Breast epithelium (tissue), 4 donors: ENCODE measurements at regions of chr3 and their contacts with region 1.

Region 1: DNA sequence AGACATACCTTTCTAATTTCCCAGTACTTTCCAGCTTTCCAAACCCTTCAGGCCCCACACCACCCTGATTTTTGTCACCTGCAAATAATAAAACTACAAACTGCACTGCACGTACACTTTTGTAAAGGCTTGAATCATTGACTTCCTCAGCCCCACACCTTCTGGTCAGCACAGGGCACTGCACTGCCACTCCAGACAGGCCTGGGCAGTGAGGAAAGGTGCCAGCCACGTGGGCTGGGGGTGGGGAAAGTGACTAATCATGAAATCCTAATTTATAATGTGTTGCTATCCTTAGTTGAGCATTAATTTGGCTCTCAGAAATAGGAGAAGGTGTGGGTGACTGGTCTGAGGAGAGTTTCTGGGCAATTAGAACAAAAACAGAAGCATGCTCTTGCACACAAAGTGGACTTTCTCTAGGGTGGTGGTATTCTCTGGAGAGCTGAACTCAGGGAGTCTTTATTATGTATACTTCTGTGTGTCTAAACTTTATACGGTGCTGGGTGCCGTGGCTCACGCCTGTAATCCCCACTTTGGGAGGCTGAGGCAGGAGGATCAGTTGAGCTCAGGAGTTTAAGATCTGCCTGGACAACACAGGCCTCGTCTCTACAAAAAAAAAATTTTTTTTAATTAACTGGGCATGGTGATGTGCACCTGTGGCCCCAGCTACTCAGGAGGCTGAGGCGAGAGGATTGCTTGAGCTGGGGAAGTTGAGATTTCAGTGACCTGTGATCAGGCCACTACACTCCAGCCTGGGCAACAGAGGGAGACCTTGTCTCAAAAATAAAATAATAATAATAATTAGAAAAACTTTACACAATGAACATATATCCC is 58.2 kb upstream of the FLNB start:
- DNase-seq: peak in 1 of 2 donors; percentile 41
- H3K4me3 ChIP-seq: no peak overlapping the region
- H3K27ac ChIP-seq: peak overlapping the region; percentile 62 to 74
- H3K4me1 ChIP-seq: peaks cover 4 to 7% of the 10 kb centered on the region in 2 donors
- H3K27me3 ChIP-seq: no peaks in the 10 kb centered on the region
- CTCF ChIP-seq: peak in 2 of 3 donors; percentile 31 to 35
- POLR2A ChIP-seq: no peak

Region 2: DNA sequence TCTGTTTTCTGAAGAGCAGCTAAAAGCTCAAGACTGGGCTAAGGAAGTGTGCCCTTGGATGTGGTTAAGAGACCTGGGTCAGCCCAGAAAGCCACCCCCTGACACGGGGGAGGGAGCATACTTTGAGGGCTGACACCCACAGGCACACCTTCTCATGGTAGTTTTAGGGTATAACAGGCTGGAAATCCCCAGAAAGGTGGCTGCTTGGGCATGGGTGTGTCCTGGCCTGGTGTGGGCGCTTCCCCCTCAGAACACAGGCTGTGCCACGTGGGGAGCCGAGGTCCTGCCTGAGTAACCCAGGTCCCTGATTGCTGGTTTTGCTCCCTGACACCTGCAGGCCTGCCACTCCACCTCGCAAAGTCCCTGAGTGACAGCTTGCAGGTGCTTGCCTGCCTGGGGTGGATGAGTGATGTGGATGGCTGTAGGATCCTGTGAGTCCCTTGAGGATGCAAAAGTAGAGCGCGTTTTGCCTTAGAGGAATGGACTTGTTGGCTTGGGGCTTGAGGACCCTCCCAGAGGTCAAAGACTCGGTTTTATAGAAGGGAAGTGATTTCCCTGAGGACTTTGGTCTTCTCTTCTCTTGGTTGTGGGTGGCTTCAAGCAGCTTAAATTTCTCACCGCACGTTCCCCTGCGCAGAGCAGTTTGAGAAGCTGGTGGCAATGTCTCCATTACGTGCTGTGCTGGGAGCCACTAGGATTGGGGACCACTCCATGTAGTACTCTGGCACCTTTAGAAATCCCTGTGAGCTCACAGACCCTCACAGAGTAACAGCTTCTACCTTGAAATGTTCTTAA is 166.4 kb after region 1 on chr3:
- intact Hi-C with region 1: loop called (anchors 10 kb)
- DNase-seq: no peak
- H3K4me3 ChIP-seq: no peak overlapping the region
- H3K27ac ChIP-seq: peak overlapping the region; percentile 41 to 50
- H3K4me1 ChIP-seq: no peaks in the 10 kb centered on the region
- H3K27me3 ChIP-seq: no peaks in the 10 kb centered on the region
- CTCF ChIP-seq: no peak
- POLR2A ChIP-seq: no peak